ENCODE measurements at regions of chr5 and their contacts with region 1.

Region 1: GRCh38 chr5:14223372-14223771 is 80.2 kb downstream of the TRIO start:
- DNase-seq: no peak
- ATAC-seq: peak in 1 of 4 donors; percentile 60
- H3K4me3 ChIP-seq: no peak overlapping the region
- H3K27ac ChIP-seq: peak overlapping the region in 6 of 12 donors; percentile 6 to 46 (median 20)
- H3K4me1 ChIP-seq: peaks cover 7 to 90% (median 64%) of the 10 kb centered on the region in 12 donors
- H3K27me3 ChIP-seq: no peaks in the 10 kb centered on the region
- CTCF ChIP-seq: no peak
- POLR2A ChIP-seq: no peak

Region 2: DNA sequence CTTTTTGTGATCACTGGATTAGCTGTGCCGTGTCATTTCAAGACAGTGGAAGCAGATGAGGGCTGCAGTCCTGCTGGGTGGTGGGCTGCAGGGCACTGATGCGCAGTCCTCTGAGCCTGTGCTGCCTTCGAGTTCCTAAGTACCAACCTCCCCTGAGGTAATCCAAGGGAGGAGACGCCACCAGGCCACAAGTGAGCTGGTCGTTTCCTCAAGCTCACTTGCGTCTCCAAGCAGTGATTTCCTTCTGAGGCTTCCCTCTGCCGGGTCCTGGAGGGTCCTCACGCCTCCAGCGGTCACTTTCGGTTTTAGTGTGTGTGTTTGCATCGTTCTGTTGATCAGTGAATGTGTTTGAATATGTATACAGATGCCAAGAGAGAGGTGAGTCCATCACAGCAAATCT is 35.5 kb after region 1 on chr5:
- intact Hi-C with region 1: loop called in 1 of 10 experiments (anchors 5 kb)
- DNase-seq: no peak
- ATAC-seq: peak; percentile 16 to 58 (median 32)
- H3K4me3 ChIP-seq: peak overlapping the region in 3 of 12 donors; percentile 3 to 7 (median 4)
- H3K27ac ChIP-seq: peak overlapping the region in 10 of 12 donors; percentile 13 to 71 (median 24)
- H3K4me1 ChIP-seq: peaks cover 0 to 70% (median 53%) of the 10 kb centered on the region in 12 donors
- H3K27me3 ChIP-seq: no peaks in the 10 kb centered on the region
- CTCF ChIP-seq: peak in 6 of 12 donors; percentile 13 to 44 (median 26)
- POLR2A ChIP-seq: no peak

Measured in heart left ventricle (tissue), 16 donors.